ENCODE measurements at regions of chr17 and their contacts with region 1.

Region 1: GRCh38 chr17:35448214-35448898 is at the start of gene SLFN13:
- DNase-seq: peak; percentile 64 to 93 (median 76)
- ATAC-seq: peak; percentile 92
- H3K4me3 ChIP-seq: peak within 1 kb of the TSS; percentile 69
- H3K4me3 Mint-ChIP-seq: peak within 1 kb of the TSS; percentile 94
- H3K27ac ChIP-seq: peak within 1 kb of the TSS; percentile 23 to 63
- H3K27ac Mint-ChIP-seq: peak within 1 kb of the TSS; percentile 81
- H3K4me1 ChIP-seq: peaks cover 18% of the 10 kb centered on the region
- H3K4me1 Mint-ChIP-seq: peaks cover 19% of the 10 kb centered on the region
- H3K27me3 ChIP-seq: no peaks in the 10 kb centered on the region
- H3K27me3 Mint-ChIP-seq: no peaks in the 10 kb centered on the region
- CTCF ChIP-seq: no peak
- total RNA-seq, gene SLFN13: 9.5 to 9.7 TPM

Region 2: DNA sequence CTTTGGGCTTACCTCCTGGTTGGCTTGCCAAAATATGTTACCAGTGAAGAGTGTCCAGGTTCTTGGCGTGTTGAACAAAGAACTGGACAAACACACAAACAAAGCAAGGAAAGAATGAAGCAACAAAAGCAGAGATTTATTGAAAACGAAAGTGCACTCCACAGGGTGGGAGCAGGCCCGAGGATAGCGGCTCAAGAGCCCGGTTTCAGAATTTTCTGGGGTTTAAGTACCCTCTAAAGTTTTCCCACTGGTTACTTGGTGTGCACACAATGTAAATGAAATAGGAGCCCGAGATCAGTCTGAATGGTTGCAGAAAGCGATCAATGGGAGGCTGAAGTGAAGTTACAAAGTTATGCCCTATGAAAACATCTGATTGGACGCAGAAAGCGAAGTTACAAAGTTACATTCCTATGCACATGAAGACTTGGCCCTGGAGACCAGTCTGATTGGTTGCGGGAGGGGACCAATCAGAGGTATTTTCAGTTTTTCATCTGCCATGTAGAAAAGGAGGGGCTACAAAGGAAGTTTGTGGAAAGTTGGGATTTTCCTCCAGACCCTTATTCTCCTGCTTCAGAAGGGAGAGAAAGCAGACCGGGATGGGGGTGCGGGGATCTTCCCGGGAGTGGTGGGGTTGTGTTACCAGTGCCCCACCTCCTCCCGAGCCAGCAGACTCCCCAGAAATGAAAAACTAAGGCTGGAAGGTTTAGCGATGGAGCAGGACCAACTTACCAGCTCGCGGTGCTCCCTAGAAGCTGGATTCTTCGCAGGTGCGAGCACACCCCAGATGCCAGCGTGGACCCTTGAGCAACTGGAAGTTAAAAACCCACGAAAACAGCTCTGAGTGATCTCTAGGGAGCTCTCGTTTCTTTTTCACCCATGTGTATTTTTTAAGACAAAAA is 15.9 kb before region 1 on chr17 and contains the start of gene SLFN12:
- CTCF ChIA-PET with region 1: interaction called, 3 read pairs
- POLR2A ChIA-PET with region 1: interaction called, 20 read pairs
- intact Hi-C with region 1: no loop called
- DNase-seq: peak in 13 of 14 experiments; percentile 5 to 87 (median 35)
- ATAC-seq: peak; percentile 92
- H3K4me3 ChIP-seq: peak within 1 kb of the TSS; percentile 88
- H3K4me3 Mint-ChIP-seq: peak within 1 kb of the TSS; percentile 99
- H3K27ac ChIP-seq: peak within 1 kb of the TSS; percentile 51 to 57
- H3K27ac Mint-ChIP-seq: peak within 1 kb of the TSS; percentile 85
- H3K4me1 ChIP-seq: peaks cover 38% of the 10 kb centered on the region
- H3K4me1 Mint-ChIP-seq: peaks cover 51% of the 10 kb centered on the region
- H3K27me3 ChIP-seq: no peaks in the 10 kb centered on the region
- H3K27me3 Mint-ChIP-seq: no peaks in the 10 kb centered on the region
- CTCF ChIP-seq: no peak
- total RNA-seq, gene SLFN12: 1.3 to 2.4 TPM

Region 3: DNA sequence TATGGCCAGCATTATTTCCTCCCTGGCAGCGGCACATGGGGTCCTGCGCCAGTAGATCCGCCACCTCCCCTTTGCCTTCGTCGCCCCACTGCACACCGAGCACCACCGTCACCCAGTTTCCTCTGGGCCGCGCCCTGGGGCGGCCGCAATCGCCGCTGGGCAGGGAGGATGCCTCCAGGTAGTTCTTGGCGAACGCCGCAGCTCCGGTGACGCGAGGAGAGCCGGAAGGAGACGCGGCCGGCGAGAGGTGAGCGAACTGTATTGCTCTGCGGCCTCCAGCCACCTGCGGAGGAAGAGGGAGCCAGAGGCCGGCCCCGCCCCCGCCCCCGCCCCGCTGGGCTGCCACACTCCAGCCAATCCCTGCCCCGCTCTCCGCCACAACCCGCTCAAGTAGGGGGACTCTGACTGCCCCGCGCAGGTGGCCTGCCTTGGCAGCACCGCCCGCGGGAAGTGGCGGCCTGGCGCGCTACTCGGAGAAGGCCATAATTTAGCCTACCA is 12.0 kb after region 1 on chr17:
- CTCF ChIA-PET with region 1: no interaction called
- POLR2A ChIA-PET with region 1: interaction called, 14 read pairs
- intact Hi-C with region 1: no loop called
- DNase-seq: peak; percentile 27 to 92 (median 52)
- ATAC-seq: peak; percentile 92
- H3K4me3 ChIP-seq: peak overlapping the region; percentile 42
- H3K4me3 Mint-ChIP-seq: peak overlapping the region; percentile 68
- H3K27ac ChIP-seq: no peak overlapping the region
- H3K27ac Mint-ChIP-seq: peak overlapping the region; percentile 80
- H3K4me1 ChIP-seq: peaks cover 12% of the 10 kb centered on the region
- H3K4me1 Mint-ChIP-seq: peaks cover 28% of the 10 kb centered on the region
- H3K27me3 ChIP-seq: no peaks in the 10 kb centered on the region
- H3K27me3 Mint-ChIP-seq: no peaks in the 10 kb centered on the region
- CTCF ChIP-seq: no peak

Measured in CD4-positive, alpha-beta T cell (primary cell).